H1 (cell line): ENCODE measurements at regions of chr2 and their contacts with region 1.

Region 1: DNA sequence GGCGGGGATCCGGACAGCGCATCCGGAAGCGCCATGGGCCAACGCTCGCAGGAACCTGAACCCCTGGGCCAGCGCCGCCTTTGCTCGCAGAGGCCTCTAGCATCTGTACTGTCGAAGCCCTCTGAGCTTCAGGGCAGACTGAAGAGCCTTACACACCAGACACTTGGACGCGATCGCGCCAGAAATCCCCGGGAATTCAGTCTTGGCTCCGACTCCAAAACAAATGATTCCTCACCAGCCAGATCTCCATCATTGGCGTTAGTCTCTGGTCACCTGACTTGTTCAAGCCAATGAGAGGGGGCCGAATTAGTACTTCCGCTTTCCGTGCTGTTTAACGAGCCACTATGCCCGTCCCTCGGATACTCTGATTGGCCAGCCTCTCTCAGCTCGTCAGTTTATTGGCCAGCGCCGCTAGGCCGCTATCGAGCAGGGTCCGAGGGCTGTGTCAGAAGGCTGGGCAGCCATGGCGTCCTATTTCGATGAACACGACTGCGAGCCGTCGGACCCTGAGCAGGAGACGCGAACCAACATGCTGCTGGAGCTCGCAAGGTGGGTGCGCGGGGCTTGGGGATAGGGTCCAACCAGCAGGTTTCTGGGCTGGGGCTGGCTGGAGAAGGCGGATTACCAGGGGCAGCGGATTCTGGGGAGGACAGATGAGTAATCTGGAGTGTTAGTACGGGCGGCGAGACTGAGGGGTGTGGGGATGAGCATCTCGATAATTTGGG is at the start of gene RNF181:
- DNase-seq: peak; percentile 85 to 91
- H3K4me3 ChIP-seq: peak within 1 kb of the TSS; percentile 77 to 88 (median 84)
- H3K27ac ChIP-seq: peak within 1 kb of the TSS; percentile 83
- H3K4me1 ChIP-seq: peaks cover 0 to 11% (median 3%) of the 10 kb centered on the region in 4 experiments; a peak in 4 of 7 replicates
- H3K27me3 ChIP-seq: peaks cover 0 to under 1% (median 0%) of the 10 kb centered on the region in 4 experiments; a peak in 1 of 7 replicates
- CTCF ChIP-seq: no peak
- EP300 ChIP-seq: no peak
- POLR2A ChIP-seq: peak; percentile 78 to 84
- RAD21 ChIP-seq: no peak
- total RNA-seq, gene RNF181: 97.2 and 99.5 TPM in 2 replicates

Region 2: GRCh38 chr2:85584857-85585783 is 10.3 kb before region 1 on chr2:
- CTCF ChIA-PET with region 1: interaction called, 5 read pairs
- POLR2A ChIA-PET with region 1: interaction called, 15 read pairs
- DNase-seq: no peak
- H3K4me3 ChIP-seq: peak overlapping the region; percentile 23 to 64 (median 52)
- H3K27ac ChIP-seq: no peak overlapping the region
- H3K4me1 ChIP-seq: peaks cover 0 to 11% (median 3%) of the 10 kb centered on the region in 4 experiments; a peak in 4 of 7 replicates
- H3K27me3 ChIP-seq: peaks cover 8 to 34% (median 21%) of the 10 kb centered on the region in 4 experiments; a peak in 6 of 7 replicates
- CTCF ChIP-seq: no peak
- EP300 ChIP-seq: no peak
- POLR2A ChIP-seq: no peak
- RAD21 ChIP-seq: no peak

Region 3: DNA sequence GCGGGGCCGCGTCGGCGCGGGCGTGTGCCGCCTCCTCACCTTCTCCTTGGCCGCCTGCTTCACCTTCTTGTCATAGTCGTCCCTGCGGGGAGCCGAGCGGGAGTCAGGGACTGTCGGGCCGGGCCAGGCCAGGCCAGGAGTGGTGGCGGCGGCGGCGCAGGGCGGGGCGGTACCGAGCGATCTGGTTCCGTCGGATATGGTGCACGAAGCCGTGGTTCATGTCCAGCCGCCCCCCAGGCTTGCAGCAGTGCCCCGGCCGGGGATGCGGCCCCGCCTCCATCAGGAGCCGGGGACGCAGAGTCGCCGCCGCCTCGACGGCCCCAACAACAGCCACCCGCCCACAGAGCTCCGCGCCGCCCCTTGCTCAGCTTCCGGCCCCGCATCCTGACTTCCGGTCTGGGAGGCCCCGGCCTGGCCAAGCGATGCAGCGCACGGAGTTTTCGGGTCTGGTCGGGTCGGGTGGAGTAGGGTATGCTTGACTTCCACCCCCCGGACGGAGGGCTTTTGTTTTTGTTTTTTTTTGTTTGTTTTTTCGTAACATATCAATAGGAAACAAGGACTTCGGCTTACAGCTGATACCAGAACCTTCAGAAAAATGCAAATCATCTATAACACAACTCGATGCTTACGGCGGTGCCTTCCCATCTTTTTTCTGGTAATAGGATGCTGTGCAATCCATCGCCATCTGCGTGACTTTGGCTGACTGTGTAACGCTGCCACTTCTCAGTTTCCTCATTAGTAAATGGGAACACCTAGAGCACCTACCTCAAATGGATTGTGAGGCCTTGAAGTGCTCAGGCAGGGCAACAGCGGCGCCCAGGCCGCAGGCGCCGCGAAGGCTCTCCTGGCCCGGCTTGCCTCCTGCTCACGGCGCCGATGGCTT is 16.5 kb after region 1 on chr2 and contains the start of gene C2orf68:
- CTCF ChIA-PET with region 1: interaction called, 5 read pairs
- POLR2A ChIA-PET with region 1: interaction called, 95 read pairs
- DNase-seq: peak; percentile 70 to 92
- H3K4me3 ChIP-seq: peak within 1 kb of the TSS; percentile 78 to 87 (median 84)
- H3K27ac ChIP-seq: peak within 1 kb of the TSS; percentile 73
- H3K4me1 ChIP-seq: peaks cover 0 to 1% (median under 1%) of the 10 kb centered on the region in 4 experiments; a peak in 4 of 7 replicates
- H3K27me3 ChIP-seq: no peaks in the 10 kb centered on the region
- CTCF ChIP-seq: no peak
- EP300 ChIP-seq: no peak
- POLR2A ChIP-seq: peak; percentile 73 to 84
- RAD21 ChIP-seq: no peak
- total RNA-seq, gene C2orf68: 40.9 and 46.3 TPM in 2 replicates

Region 4: DNA sequence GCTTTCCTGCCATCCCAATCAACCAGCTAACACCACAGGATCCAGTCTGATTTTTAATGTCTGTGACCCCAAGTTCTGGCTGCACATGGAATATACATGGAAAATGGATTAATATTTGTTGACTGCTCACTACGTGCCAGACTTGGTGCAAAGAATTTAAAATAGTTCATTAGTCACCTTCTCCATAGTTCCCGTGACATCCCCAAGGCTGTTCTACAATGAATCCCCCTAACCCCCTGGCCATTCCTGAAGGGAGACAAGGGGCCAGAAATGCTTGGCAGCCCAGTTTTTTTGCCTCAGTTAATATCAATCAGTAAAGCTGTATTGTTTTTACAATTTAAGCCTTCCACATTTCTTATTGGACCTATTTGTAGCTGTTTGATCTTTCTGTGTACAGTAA is 364.4 kb after region 1 on chr2:
- CTCF ChIA-PET with region 1: no interaction called
- POLR2A ChIA-PET with region 1: no interaction called
- DNase-seq: no peak
- H3K4me3 ChIP-seq: no peak overlapping the region
- H3K27ac ChIP-seq: no peak overlapping the region
- H3K4me1 ChIP-seq: peaks cover 0 to 7% (median 5%) of the 10 kb centered on the region in 4 experiments; a peak in 3 of 7 replicates
- H3K27me3 ChIP-seq: no peaks in the 10 kb centered on the region
- CTCF ChIP-seq: no peak
- EP300 ChIP-seq: no peak
- POLR2A ChIP-seq: no peak
- RAD21 ChIP-seq: no peak